HepG2 (cell line): ENCODE measurements at regions of chr14 and their contacts with region 1.

Region 1: DNA sequence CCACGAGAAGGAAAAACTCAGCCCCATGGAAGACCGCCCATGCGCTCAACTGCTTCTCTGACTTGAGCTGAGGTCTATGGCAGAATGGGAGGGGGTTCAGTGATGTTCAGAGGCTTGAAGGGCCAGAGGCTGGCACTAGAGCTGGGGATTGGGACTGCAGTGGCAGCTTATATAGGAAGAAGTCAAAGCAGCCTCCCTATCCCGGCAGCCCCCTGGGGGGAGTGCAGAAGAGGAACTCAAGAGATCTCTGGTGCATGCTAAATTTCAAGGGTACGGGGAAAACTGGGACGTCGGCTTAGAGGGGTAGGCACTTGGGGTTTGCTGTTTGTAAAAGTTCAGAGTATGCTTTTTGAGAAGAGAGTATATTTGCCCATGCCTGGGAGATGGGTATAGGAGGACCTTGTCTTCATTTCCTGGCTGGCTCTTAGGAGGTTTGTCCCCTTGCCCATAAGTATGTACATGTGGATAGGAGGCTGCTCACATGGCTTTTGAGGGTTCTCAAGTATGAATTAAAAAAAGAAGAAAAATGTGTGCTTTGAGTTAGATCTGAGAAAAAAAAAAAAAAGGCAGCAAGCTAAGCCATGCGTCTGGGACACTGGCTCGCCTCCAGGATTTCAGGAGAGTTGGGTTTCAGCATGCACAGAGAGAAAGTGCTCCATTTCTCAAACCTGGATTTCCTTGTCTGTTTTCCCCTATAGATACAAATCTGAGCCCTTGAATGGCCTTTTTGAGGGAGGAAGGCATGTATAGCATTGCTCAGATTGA is 3.2 kb upstream of the MEG3 start:
- DNase-seq: no peak
- ATAC-seq: no peak
- H3K4me3 ChIP-seq: peak overlapping the region in 2 of 3 experiments; percentile 11 to 27; a peak in 1 of 6 replicates
- H3K27ac ChIP-seq: peak overlapping the region; percentile 87
- H3K4me1 ChIP-seq: peaks cover 64% of the 10 kb centered on the region
- H3K27me3 ChIP-seq: no peaks in the 10 kb centered on the region
- CTCF ChIP-seq: no peak
- EP300 ChIP-seq: no peak
- POLR2A ChIP-seq: no peak
- RAD21 ChIP-seq: no peak

Region 2: DNA sequence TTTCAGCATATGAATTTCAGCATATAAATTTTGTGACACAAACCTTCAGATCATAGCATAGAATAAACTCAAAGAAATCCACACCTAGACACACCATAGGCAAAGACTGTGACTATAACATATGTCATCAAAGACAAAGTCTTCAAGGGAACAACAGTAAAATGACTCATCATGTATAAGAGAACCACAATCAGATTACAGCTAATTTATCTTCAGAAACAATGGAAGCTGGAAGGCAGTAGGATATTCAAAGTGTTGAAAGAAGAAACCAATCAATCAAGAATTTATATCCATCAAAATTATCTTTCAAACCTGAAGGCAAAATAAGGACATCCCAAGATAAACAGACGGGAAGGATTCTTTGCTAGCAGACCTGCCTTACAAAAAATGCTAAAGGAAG is 67.1 kb before region 1 on chr14:
- CTCF ChIA-PET with region 1: no interaction called
- POLR2A ChIA-PET with region 1: interaction called, 102 read pairs
- in situ Hi-C with region 1: no loop called
- intact Hi-C with region 1: loop called (anchors 1 kb)
- DNase-seq: no peak
- ATAC-seq: no peak
- H3K4me3 ChIP-seq: no peak overlapping the region
- H3K27ac ChIP-seq: no peak overlapping the region
- H3K4me1 ChIP-seq: peaks cover 59% of the 10 kb centered on the region
- H3K27me3 ChIP-seq: no peaks in the 10 kb centered on the region
- CTCF ChIP-seq: no peak
- EP300 ChIP-seq: no peak
- POLR2A ChIP-seq: no peak
- RAD21 ChIP-seq: no peak